ENCODE measurements at regions of chr17 and their contacts with region 1.

Region 1: DNA sequence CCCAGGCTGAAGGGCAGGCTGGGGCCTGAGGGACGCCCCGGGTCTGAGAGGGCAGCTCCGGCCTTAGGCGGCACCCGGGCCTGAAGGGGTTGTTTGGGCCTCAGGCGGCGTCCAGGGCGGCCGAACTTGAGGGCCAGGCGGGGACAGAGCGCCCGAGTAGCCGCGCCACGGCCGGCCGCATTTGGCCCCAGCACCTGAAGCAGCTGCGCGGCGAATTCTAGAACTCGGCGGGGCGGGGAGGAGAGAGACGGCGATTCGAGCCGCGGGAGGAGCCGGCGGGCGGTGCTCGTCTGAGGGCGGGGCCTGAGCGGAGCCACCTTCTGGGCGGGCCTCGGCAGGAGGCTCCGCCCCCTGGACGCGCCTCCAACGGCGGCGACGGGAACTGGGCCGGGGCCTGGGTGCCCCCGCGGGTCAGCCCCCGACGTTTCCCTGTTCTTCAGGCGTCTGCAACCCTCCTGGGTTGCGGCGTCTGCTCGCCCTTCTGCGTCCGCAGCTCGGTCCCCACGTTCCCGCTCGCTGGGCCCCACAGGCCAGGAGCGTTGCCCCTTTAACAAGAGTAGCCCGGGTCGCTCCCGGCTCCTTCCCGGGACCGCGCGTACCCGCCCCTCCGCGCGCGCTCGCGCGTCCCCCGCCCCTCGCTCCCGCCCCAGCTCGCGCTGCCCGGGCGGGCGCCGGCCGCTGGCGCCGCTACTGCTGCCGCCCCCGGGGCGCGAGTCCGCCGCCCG is at the starts of genes INCA1 and KIF1C:
- DNase-seq: peak; percentile 97
- H3K4me3 ChIP-seq: peak within 1 kb of the TSS; percentile 90 to 99 (median 98)
- H3K27ac ChIP-seq: peak within 1 kb of the TSS; percentile 96 to 97 (median 96)
- H3K4me1 ChIP-seq: peaks cover 0 to 34% (median 31%) of the 10 kb centered on the region in 4 donors
- H3K27me3 ChIP-seq: no peaks in the 10 kb centered on the region
- CTCF ChIP-seq: peak in 2 of 4 experiments; percentile 24 to 34
- EP300 ChIP-seq: no peak
- POLR2A ChIP-seq: peak; percentile 73 to 78
- total RNA-seq, gene INCA1: 0.36 to 3.0 (median 1.5) TPM
- total RNA-seq, gene KIF1C: 46.4 to 101 (median 81.0) TPM

Region 2: GRCh38 chr17:5031365-5032082 is 34.1 kb after region 1 on chr17:
- intact Hi-C with region 1: loop called (anchors 2 kb)
- DNase-seq: peak; percentile 90
- H3K4me3 ChIP-seq: peak overlapping the region; percentile 24 to 56 (median 50)
- H3K27ac ChIP-seq: peak overlapping the region; percentile 3 to 62 (median 45)
- H3K4me1 ChIP-seq: peaks cover 0 to 16% (median 8%) of the 10 kb centered on the region in 4 donors
- H3K27me3 ChIP-seq: peaks cover 4 to 22% (median 6%) of the 10 kb centered on the region in 3 donors
- CTCF ChIP-seq: peak; percentile 67 to 87 (median 82)
- EP300 ChIP-seq: no peak
- POLR2A ChIP-seq: no peak

Measured in sigmoid colon (tissue), 7 donors.